Posterior vena cava (tissue), 2 donors: ENCODE measurements at regions of chr10 and their contacts with region 1.

Region 1: GRCh38 chr10:62199584-62199983 is 69.1 kb downstream of the RTKN2 start:
- DNase-seq: no peak

Region 2: DNA sequence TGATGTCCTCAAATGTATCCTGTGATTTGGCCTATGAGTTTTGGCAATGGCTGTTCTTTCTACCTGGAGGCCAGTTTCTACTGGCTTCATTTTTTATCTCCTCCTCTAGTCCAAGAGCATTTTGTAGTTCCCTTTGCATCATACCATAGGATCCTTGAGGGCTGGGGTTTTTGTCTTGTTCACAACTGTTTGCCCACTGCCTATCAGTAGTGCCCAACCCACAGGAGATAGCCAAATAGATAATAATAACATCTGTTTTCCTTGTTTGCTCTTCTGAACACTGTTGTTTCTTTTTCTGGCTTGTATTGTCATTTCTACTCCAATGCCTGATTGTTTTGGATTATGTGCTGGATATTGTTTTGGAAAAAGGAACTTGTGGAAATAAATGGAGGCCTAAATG is 1417.9 kb before region 1 on chr10:
- intact Hi-C with region 1: loop called in 1 of 2 experiments (anchors 5 kb)
- DNase-seq: no peak

Region 3: GRCh38 chr10:62050893-62051433 is 148.6 kb before region 1 on chr10:
- intact Hi-C with region 1: no loop called
- DNase-seq: peak; percentile 88

Region 4: DNA sequence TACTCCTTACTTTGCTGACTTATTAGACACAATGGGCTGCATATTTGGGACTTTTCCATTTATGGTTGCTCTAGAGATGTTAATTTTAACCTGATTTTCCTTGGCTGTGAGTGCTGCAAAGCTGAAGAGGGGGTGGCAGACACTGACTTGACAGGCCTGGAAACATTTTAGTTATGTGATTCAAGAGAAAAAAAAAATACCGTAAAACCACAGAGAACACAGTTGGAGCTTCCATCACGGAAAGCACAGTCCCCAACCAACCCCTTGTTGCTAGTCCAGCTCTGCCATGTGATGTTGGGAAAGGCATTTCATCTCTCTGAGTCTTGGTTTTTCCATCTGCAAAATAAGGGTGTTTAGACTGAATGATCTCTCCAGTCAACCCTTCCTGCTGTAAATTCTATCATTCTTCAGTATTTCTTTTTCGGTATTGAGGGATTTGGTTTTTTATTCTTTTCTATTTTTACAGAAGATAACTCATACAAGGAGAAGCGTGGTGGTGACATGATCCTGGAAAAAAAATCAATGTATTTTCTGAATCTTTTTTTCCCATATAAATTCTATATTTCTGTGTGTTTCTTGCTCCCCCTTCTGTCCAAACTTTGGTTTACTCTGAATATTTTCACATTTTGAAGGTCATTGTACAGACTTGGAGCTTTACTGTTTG is 1567.7 kb after region 1 on chr10:
- intact Hi-C with region 1: loop called in 1 of 2 experiments (anchors 10 kb)
- DNase-seq: no peak